Ascending aorta (tissue), 2 donors: ENCODE measurements at regions of chr5 and their contacts with region 1.

Region 1: GRCh38 chr5:10761166-10761932 is at the start of gene DAP:
- DNase-seq: peak; percentile 41 to 91
- H3K4me3 ChIP-seq: peak within 1 kb of the TSS; percentile 67 to 96
- H3K27ac ChIP-seq: peak within 1 kb of the TSS; percentile 98 to 99
- H3K4me1 ChIP-seq: peaks cover 7 to 26% of the 10 kb centered on the region in 2 donors
- H3K27me3 ChIP-seq: no peaks in the 10 kb centered on the region
- CTCF ChIP-seq: peak in 1 of 3 experiments; percentile 4
- total RNA-seq, gene DAP: 117 TPM

Region 2: DNA sequence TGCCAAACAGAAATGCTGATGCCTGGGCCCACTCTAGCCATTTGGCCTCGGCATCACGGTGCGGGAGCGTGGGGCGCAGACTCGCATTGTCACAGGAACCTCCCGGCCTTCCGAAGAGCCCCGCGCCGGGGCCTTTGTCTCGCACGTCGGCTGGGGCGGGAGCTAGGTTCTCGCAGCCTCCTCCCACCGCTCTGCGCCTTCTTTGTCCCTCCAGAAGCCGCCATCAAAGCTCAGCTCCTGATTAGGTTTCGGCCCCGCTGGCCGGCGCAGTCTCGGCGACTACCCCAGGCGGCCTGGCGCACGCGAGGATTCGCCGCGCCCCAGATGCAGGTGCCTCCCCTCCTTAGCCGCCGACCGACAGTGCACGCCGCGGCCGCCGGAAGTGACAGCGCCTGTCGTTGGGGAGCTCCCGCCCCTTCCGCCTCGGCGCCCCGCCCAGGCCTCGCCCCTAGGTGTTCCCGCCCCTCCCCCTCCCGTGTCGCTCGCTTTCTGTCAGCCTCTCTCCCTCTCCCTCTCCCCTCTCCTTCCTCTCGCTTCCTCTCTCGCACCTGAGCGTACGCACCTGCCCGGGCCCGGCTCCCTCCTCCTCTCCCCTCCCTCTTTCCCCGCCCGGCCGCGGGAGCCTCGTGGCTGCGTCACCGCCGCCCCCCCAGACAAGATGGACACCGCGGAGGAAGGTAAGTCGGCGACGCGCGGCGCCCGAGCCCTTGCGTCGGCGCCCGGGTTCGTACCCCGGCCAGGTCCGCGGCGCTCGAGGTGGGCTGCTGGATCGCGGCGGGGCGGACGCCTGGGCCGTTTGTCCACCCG is 407.9 kb before region 1 on chr5 and contains the start of gene MARCHF6:
- intact Hi-C with region 1: loop called (anchors 5 kb)
- DNase-seq: peak; percentile 79 to 96
- H3K4me3 ChIP-seq: peak within 1 kb of the TSS; percentile 83 to 84
- H3K27ac ChIP-seq: peak within 1 kb of the TSS; percentile 95 to 96
- H3K4me1 ChIP-seq: peaks cover 0 to 15% of the 10 kb centered on the region in 2 donors
- H3K27me3 ChIP-seq: no peaks in the 10 kb centered on the region
- CTCF ChIP-seq: peak in 1 of 3 experiments; percentile 8
- total RNA-seq, gene MARCHF6: 47.0 TPM

Region 3: GRCh38 chr5:10590226-10590999 is 170.9 kb before region 1 on chr5:
- intact Hi-C with region 1: no loop called
- DNase-seq: no peak
- H3K4me3 ChIP-seq: no peak overlapping the region
- H3K27ac ChIP-seq: peak overlapping the region; percentile 13 to 49
- H3K4me1 ChIP-seq: peaks cover 4% of the 10 kb centered on the region in 2 donors
- H3K27me3 ChIP-seq: no peaks in the 10 kb centered on the region
- CTCF ChIP-seq: no peak

Region 4: GRCh38 chr5:10601246-10602030 is 159.9 kb before region 1 on chr5:
- intact Hi-C with region 1: loop called (anchors 10 kb)
- DNase-seq: peak; percentile 62 to 91
- H3K4me3 ChIP-seq: peak overlapping the region in 1 of 2 donors; percentile 47
- H3K27ac ChIP-seq: peak overlapping the region; percentile 72 to 82
- H3K4me1 ChIP-seq: peaks cover 2 to 27% of the 10 kb centered on the region in 2 donors
- H3K27me3 ChIP-seq: no peaks in the 10 kb centered on the region
- CTCF ChIP-seq: no peak

Region 5: DNA sequence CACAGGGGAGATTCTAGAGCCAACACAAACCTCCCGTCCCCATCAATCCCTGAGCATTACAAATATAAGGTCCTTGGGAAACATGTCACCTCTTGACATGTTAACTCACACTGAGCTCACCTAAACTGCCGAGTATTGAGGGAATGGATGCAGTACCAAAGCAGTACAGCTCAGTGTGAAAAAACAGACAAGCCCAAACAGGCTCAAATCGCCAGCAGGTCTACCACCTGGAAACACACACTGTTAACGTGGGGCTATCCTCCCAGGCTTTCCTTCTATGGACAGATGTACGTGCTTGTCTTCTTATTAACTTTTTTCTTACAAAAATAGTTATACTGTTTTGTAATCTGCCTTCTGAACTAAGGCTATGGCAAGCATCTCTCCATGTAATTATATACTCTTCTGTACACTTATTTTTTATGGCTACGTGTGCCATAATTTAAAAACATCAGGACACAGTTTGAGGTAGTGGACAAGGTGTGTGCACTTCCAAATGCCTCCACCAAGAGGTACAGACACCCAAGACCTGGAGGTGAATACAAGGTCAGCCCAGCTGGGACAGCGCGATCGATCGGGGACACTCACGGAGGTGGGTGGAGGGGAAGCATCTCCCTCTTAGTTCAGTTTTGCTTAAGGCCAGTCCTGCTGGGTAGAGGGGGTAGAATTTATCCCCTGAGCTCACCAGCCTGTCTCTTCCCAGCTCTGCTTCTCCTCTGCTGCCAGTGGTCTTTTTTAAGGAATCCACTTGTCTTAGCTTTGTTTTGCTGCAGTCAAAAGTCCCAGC is 76.9 kb before region 1 on chr5:
- intact Hi-C with region 1: no loop called
- DNase-seq: no peak
- H3K4me3 ChIP-seq: no peak overlapping the region
- H3K27ac ChIP-seq: no peak overlapping the region
- H3K4me1 ChIP-seq: no peaks in the 10 kb centered on the region
- H3K27me3 ChIP-seq: no peaks in the 10 kb centered on the region
- CTCF ChIP-seq: no peak

Region 6: DNA sequence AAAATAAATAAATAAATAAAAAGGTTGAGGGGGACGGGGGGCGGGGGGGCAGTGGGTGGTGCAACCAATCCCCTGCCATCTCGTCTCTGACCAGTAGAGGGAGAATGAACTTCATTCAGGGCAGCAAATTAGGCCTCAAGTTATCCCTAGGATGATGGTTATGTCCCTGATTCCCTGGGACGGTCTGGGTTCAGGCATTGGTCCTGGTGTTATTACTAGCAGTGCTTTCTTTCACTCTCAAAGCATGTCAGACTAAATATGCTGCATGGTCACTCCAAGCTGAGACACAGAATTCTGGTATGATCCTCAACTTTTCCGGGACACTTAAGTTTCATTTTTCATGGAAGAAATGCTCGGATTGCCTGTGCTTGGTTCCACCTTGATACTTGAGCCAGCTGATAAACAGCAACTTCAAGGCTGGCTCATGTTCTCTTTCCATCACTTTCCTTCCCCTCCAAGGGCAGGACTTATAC is 59.7 kb before region 1 on chr5:
- intact Hi-C with region 1: loop called (anchors 10 kb)
- DNase-seq: no peak
- H3K4me3 ChIP-seq: no peak overlapping the region
- H3K27ac ChIP-seq: peak overlapping the region; percentile 36 to 59
- H3K4me1 ChIP-seq: peaks cover 2 to 24% of the 10 kb centered on the region in 2 donors
- H3K27me3 ChIP-seq: no peaks in the 10 kb centered on the region
- CTCF ChIP-seq: peak in 2 of 3 experiments; percentile 51 to 71

Region 7: DNA sequence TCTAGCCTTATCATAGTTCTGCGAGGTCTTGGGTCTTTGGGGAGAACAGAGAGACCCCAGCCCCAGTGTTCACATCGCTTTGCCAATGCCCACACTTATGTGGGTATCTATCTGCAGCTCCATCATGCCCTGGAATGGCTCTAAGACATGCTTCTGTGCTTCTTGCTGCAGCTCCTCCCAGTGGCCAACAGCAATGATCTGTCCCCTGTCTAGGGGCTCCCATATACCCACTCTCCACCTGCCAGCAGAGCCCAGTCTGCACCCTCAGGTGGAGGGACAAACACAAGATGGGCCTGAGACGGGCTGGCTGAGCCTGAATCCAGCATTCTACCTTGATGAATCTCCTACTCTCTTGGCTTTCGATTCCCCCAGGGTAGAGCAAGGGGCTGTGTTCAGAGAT is 14.3 kb after region 1 on chr5:
- intact Hi-C with region 1: no loop called
- DNase-seq: no peak
- H3K4me3 ChIP-seq: no peak overlapping the region
- H3K27ac ChIP-seq: no peak overlapping the region
- H3K4me1 ChIP-seq: no peaks in the 10 kb centered on the region
- H3K27me3 ChIP-seq: no peaks in the 10 kb centered on the region
- CTCF ChIP-seq: no peak